ENCODE measurements at regions of chr22 and their contacts with region 1.

Region 1: DNA sequence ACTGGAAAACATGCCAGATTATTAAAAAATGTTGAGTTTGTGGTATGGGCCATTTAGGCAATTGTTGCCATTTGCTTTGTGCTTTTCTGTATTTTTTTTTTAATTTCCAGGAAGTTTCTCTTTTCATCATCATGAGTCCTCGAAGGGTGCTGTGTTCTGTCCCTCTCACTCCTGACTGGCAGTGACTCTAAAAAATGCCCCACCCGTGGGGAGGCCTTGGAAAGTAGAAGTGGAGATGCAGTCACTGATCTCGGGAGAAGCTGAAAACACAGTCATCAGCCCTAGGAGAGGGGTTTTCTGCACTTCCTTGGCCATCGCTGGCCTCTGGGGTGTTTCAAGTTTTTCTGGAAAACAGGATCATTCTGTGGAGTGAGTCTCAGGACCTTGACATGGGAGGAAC is 98.5 kb upstream of the GRK3 start:
- DNase-seq: no peak
- H3K4me3 Mint-ChIP-seq: no peak overlapping the region
- H3K27ac Mint-ChIP-seq: peak overlapping the region; percentile 31
- H3K4me1 Mint-ChIP-seq: no peaks in the 10 kb centered on the region
- H3K27me3 Mint-ChIP-seq: no peaks in the 10 kb centered on the region
- CTCF ChIP-seq: no peak

Region 2: GRCh38 chr22:25235547-25236290 is 230.2 kb before region 1 on chr22:
- CTCF ChIA-PET with region 1: no interaction called
- POLR2A ChIA-PET with region 1: no interaction called
- intact Hi-C with region 1: loop called (anchors 5 kb)
- DNase-seq: peak; percentile 80
- H3K4me3 Mint-ChIP-seq: no peak overlapping the region
- H3K27ac Mint-ChIP-seq: no peak overlapping the region
- H3K4me1 Mint-ChIP-seq: peaks cover 7% of the 10 kb centered on the region
- H3K27me3 Mint-ChIP-seq: peaks cover 8% of the 10 kb centered on the region
- CTCF ChIP-seq: peak; percentile 86

Region 3: DNA sequence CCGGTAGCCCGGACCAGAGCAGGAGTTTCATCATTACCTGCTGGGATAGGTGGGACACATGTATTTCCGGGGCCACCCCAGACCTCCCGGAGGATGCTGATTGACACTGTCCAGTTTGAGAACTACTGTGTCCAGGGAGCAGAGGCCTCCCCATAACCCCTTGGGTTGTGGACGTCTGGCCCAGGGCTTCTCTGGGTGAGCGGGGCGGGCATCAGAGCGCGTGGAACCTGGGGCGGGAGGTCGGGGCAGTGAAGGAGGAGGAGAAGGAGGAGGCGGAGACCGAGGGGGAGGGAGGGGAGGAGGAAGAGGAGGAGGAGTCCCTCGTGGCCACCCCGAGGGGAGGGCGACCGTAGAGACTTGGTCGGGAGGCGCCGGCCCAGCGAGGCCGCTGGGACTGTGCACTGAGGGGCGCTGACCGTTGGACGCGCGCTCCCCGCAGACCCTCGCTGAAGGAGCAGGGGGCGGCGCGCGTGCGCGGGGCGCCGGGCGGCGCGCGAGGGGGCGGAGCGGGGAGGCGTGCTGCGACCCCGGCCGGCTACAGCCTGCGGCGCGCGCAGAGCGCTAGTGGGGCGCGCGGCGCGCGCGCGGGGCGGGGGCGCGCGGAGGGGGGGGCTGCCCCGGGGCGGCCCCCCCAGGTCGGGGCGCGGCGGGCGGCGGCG is 98.5 kb after region 1 on chr22 and contains the start of gene GRK3:
- CTCF ChIA-PET with region 1: interaction called, 7 read pairs
- POLR2A ChIA-PET with region 1: no interaction called
- intact Hi-C with region 1: loop called (anchors 5 kb)
- DNase-seq: peak; percentile 75
- H3K4me3 Mint-ChIP-seq: peak within 1 kb of the TSS; percentile 77
- H3K27ac Mint-ChIP-seq: peak within 1 kb of the TSS; percentile 3
- H3K4me1 Mint-ChIP-seq: peaks cover 5% of the 10 kb centered on the region
- H3K27me3 Mint-ChIP-seq: no peaks in the 10 kb centered on the region
- CTCF ChIP-seq: no peak
- total RNA-seq, gene GRK3: 6.5 and 7.9 TPM in 2 replicates

Measured in MCF 10A (cell line).